ENCODE measurements at regions of chr5 and their contacts with region 1.

Region 1: GRCh38 chr5:54867310-54867944 is 118.0 kb downstream of the ESM1 start:
- DNase-seq: no peak
- ATAC-seq: no peak
- H3K4me3 Mint-ChIP-seq: no peak overlapping the region
- H3K27ac Mint-ChIP-seq: no peak overlapping the region
- H3K4me1 Mint-ChIP-seq: peaks cover 29% of the 10 kb centered on the region
- H3K27me3 Mint-ChIP-seq: peaks cover 34% of the 10 kb centered on the region

Region 2: GRCh38 chr5:53779541-53779981 is 1087.9 kb before region 1 on chr5:
- CTCF ChIA-PET with region 1: no interaction called
- POLR2A ChIA-PET with region 1: no interaction called
- intact Hi-C with region 1: no loop called
- DNase-seq: peak; percentile 6
- ATAC-seq: peak; percentile 74
- H3K4me3 Mint-ChIP-seq: no peak overlapping the region
- H3K27ac Mint-ChIP-seq: peak overlapping the region; percentile 28
- H3K4me1 Mint-ChIP-seq: peaks cover 15% of the 10 kb centered on the region
- H3K27me3 Mint-ChIP-seq: peaks cover 2% of the 10 kb centered on the region

Region 3: GRCh38 chr5:54886866-54887265 is 19.4 kb after region 1 on chr5:
- CTCF ChIA-PET with region 1: interaction called, 12 read pairs
- POLR2A ChIA-PET with region 1: interaction called, 3 read pairs
- intact Hi-C with region 1: no loop called
- DNase-seq: no peak
- ATAC-seq: no peak
- H3K4me3 Mint-ChIP-seq: no peak overlapping the region
- H3K27ac Mint-ChIP-seq: no peak overlapping the region
- H3K4me1 Mint-ChIP-seq: peaks cover 6% of the 10 kb centered on the region
- H3K27me3 Mint-ChIP-seq: peaks cover 73% of the 10 kb centered on the region

Region 4: GRCh38 chr5:55159763-55160492 is 292.5 kb after region 1 on chr5 and contains the start of gene GPX8:
- CTCF ChIA-PET with region 1: interaction called, 13 read pairs
- POLR2A ChIA-PET with region 1: no interaction called
- intact Hi-C with region 1: no loop called
- DNase-seq: peak; percentile 27
- ATAC-seq: peak; percentile 57
- H3K4me3 Mint-ChIP-seq: no peak within 1 kb of the TSS
- H3K27ac Mint-ChIP-seq: no peak within 1 kb of the TSS
- H3K4me1 Mint-ChIP-seq: no peaks in the 10 kb centered on the region
- H3K27me3 Mint-ChIP-seq: peaks cover 37% of the 10 kb centered on the region
- total RNA-seq, gene GPX8: not detected

Measured in activated CD4-positive, alpha-beta T cell treated with anti-CD3 and anti-CD28 coated beads for 36 hours (primary cell).